ENCODE measurements at regions of chr17 and their contacts with region 1.

Region 1: GRCh38 chr17:15502369-15503112 is 35.1 kb upstream of the CDRT4 start:
- DNase-seq: peak; percentile 81
- H3K4me3 ChIP-seq: peak overlapping the region; percentile 23
- H3K27me3 ChIP-seq: no peaks in the 10 kb centered on the region
- CTCF ChIP-seq: peak; percentile 95

Region 2: GRCh38 chr17:15233022-15233805 is 269.3 kb before region 1 on chr17:
- CTCF ChIA-PET with region 1: interaction called, 11 read pairs
- POLR2A ChIA-PET with region 1: no interaction called
- DNase-seq: no peak
- H3K4me3 ChIP-seq: no peak overlapping the region
- H3K27me3 ChIP-seq: no peaks in the 10 kb centered on the region
- CTCF ChIP-seq: peak; percentile 56

Region 3: GRCh38 chr17:15257258-15257788 is 245.2 kb before region 1 on chr17:
- CTCF ChIA-PET with region 1: interaction called, 43 read pairs
- POLR2A ChIA-PET with region 1: no interaction called
- DNase-seq: peak; percentile 44
- H3K4me3 ChIP-seq: no peak overlapping the region
- H3K27me3 ChIP-seq: no peaks in the 10 kb centered on the region
- CTCF ChIP-seq: peak; percentile 91

Region 4: GRCh38 chr17:15398736-15399331 is 103.7 kb before region 1 on chr17:
- CTCF ChIA-PET with region 1: interaction called, 10 read pairs
- POLR2A ChIA-PET with region 1: no interaction called
- DNase-seq: no peak
- H3K4me3 ChIP-seq: no peak overlapping the region
- H3K27me3 ChIP-seq: no peaks in the 10 kb centered on the region
- CTCF ChIP-seq: no peak

Region 5: GRCh38 chr17:15417974-15418373 is 84.6 kb before region 1 on chr17:
- CTCF ChIA-PET with region 1: no interaction called
- POLR2A ChIA-PET with region 1: no interaction called
- DNase-seq: no peak
- H3K4me3 ChIP-seq: no peak overlapping the region
- H3K27me3 ChIP-seq: no peaks in the 10 kb centered on the region
- CTCF ChIP-seq: no peak

Region 6: DNA sequence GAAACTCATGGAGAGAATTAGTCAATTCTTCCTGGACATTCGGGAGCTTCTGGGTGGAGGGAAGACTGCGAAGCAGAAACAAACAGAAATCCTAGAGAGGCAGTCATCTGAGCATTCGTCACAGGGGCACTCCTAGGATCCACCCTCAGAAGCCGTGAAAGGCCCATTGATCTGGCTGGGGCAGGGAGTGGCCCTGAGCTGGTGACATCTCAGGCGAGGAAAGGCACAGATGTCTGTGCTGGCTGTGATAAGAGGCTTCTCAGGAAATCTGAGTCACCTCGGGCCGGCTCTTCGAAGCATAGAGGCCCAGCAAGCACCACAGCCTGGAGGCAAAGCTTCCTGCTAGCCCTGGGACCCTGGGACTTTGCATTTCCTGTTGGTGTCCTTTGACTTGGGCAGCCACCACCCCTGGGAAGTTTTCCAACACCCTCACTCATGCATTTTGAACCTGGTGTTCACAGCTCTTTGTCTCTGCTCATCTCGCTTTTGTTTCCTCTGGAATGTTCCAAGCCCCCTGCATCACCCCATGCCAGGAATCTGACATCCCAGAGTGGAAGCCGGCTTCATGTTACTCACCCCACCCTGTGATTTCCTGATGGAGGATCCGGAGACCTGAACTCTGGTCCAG is 11.8 kb before region 1 on chr17:
- CTCF ChIA-PET with region 1: interaction called, 15 read pairs
- POLR2A ChIA-PET with region 1: no interaction called
- DNase-seq: peak; percentile 40
- H3K4me3 ChIP-seq: no peak overlapping the region
- H3K27me3 ChIP-seq: no peaks in the 10 kb centered on the region
- CTCF ChIP-seq: no peak

Measured in BJ (cell line).